Sigmoid colon (tissue), 7 donors: ENCODE measurements at regions of chr22 and their contacts with region 1.

Region 1: DNA sequence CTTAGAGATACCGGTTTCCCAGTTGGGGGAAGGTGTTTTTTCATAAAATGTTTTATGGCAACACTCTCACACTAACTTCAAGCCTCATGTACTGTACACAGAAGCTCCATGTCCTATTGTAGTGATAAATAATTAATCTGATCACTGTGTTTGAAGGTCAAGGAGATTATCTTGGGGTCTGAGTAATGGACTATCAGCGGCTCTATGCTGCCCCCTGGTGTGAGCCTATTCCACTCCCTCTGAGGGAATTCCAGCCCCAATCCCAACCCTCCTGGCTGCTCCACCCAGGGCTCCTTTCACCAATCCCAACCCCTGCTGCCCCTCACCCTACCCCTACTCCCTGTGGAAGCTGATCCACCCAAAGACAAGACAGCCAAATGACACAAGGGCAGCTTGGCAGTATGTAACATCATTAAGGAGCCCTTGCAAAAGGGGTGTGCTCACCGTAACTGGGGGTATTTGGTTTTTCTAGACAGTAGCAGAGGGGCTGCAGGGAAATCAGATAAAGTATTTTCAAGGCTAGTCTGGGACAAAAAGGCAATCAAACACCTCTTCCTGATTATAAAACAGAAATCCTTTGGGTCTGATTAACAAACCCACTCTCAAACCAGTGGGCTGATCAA is 22.3 kb downstream of the HPS4 start:
- DNase-seq: no peak
- H3K4me3 ChIP-seq: no peak overlapping the region
- H3K27ac ChIP-seq: no peak overlapping the region
- H3K4me1 ChIP-seq: peaks cover 0 to 31% (median 15%) of the 10 kb centered on the region in 4 donors
- H3K27me3 ChIP-seq: no peaks in the 10 kb centered on the region
- CTCF ChIP-seq: peak; percentile 58 to 81 (median 76)
- EP300 ChIP-seq: no peak
- POLR2A ChIP-seq: no peak

Region 2: DNA sequence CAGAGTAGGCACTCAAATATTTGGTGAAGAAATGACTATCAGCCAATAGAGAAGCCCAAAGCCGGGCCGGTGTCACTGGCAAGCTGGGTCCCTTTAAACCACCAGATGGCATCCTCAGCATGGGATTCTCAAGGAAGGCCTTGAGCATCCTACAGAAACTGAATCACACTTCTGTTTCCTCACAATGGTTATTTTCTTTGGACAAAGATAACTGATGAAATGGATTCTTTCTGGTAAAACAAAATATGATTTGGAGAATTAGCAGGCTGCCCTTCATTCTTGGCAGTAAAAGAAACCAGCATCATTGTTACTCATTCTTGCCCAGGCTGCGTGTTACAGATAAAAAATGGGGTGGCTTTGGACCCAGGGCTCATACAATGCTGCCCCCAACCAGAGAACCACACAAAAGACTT is 62.6 kb before region 1 on chr22:
- intact Hi-C with region 1: loop called (anchors 1 kb)
- DNase-seq: peak; percentile 72
- H3K4me3 ChIP-seq: no peak overlapping the region
- H3K27ac ChIP-seq: no peak overlapping the region
- H3K4me1 ChIP-seq: no peaks in the 10 kb centered on the region
- H3K27me3 ChIP-seq: no peaks in the 10 kb centered on the region
- CTCF ChIP-seq: peak; percentile 29 to 75 (median 65)
- EP300 ChIP-seq: no peak
- POLR2A ChIP-seq: no peak

Region 3: DNA sequence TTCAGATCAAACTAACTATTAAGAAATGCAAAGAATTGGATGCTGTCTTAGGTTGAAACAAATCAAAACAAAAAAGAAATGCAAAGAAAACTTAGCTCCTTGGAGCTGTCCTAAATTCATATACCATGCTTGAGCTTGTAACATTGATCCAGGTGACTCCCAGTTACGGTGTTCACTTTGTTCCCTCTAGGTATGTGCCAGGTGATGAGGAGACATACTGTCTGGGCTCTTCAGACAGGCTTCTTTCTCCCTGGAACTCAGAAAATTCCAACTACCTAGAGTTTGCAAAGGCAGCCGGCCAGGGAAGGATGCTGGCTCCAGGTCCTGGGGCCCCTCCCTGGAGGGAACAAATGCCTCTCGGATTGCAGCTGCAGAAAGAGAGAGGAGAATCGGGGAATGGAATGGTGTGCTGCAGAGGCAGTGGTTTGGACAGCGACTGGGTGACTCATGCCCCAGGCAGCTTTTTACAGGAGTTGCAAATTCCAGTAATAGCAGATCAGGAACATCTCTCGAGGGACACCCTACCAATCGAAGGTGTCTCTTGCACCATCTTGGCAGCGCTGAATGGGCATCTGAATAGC is 44.5 kb before region 1 on chr22:
- intact Hi-C with region 1: loop called (anchors 5 kb)
- DNase-seq: no peak
- H3K4me3 ChIP-seq: no peak overlapping the region
- H3K27ac ChIP-seq: peak overlapping the region in 3 of 4 donors; percentile 67 to 72 (median 69)
- H3K4me1 ChIP-seq: peaks cover 0 to 43% (median 42%) of the 10 kb centered on the region in 4 donors
- H3K27me3 ChIP-seq: peaks cover 0 to 2% (median 0%) of the 10 kb centered on the region in 3 donors
- CTCF ChIP-seq: no peak
- EP300 ChIP-seq: no peak
- POLR2A ChIP-seq: no peak